Activated CD4-positive, alpha-beta T cell treated with anti-CD3 and anti-CD28 coated beads, Interleukin-2, amount 10 ng/mL, durations not matched to agents 24 days and 14 days (primary cell): ENCODE measurements at regions of chr5 and their contacts with region 1.

Region 1: GRCh38 chr5:7894860-7895259 is 25.9 kb downstream of the MTRR start:
- DNase-seq: no peak
- H3K4me3 Mint-ChIP-seq: no peak overlapping the region
- H3K27ac Mint-ChIP-seq: no peak overlapping the region
- H3K4me1 Mint-ChIP-seq: peaks cover 13% of the 10 kb centered on the region
- H3K27me3 Mint-ChIP-seq: no peaks in the 10 kb centered on the region

Region 2: GRCh38 chr5:7878381-7878873 is 16.4 kb before region 1 on chr5:
- intact Hi-C with region 1: loop called (anchors 2 kb)
- DNase-seq: no peak
- H3K4me3 Mint-ChIP-seq: peak overlapping the region; percentile 41
- H3K27ac Mint-ChIP-seq: peak overlapping the region; percentile 72
- H3K4me1 Mint-ChIP-seq: peaks cover 40% of the 10 kb centered on the region
- H3K27me3 Mint-ChIP-seq: no peaks in the 10 kb centered on the region